ENCODE measurements at regions of chr2 and their contacts with region 1.

Region 1: GRCh38 chr2:30871980-30872789 is 64.9 kb upstream of the CAPN13 start:
- H3K4me3 ChIP-seq: no peak overlapping the region
- H3K27ac ChIP-seq: no peak overlapping the region
- H3K4me1 ChIP-seq: peaks cover 9% of the 10 kb centered on the region
- CTCF ChIP-seq: no peak

Region 2: GRCh38 chr2:30068067-30068466 is 804.1 kb before region 1 on chr2:
- CTCF ChIA-PET with region 1: no interaction called
- POLR2A ChIA-PET with region 1: no interaction called
- H3K4me3 ChIP-seq: no peak overlapping the region
- H3K27ac ChIP-seq: no peak overlapping the region
- H3K4me1 ChIP-seq: no peaks in the 10 kb centered on the region
- CTCF ChIP-seq: no peak

Region 3: DNA sequence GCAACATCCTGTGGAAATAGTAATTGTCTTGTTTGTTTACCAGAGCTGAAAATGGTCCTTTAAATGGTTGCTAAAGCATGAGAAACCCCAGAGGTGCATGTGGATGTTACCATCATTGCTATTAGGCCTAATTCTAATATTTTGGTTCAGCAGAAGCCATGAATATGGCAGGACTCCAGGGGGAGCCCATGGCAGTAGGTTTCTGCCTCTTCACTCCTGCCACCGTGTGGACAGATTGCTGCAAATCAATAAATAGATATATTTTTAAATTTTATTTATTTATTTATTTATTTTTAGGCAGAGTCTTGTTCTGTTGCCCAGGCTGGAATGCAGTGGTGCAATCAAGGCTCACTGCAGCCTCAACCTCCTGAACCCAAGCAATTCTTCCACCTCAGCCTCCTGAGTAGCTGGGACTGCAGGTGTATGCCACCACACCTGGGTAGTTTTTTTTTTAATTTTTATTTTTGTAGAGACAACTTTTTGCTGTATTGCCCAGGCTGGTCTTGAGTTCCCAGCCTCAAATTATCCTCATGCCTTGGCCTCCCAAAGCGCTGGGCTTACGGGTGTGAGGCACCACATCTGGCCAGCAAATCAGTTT is 10.0 kb before region 1 on chr2:
- CTCF ChIA-PET with region 1: interaction called, 10 read pairs
- POLR2A ChIA-PET with region 1: no interaction called
- H3K4me3 ChIP-seq: no peak overlapping the region
- H3K27ac ChIP-seq: no peak overlapping the region
- H3K4me1 ChIP-seq: no peaks in the 10 kb centered on the region; the same call in 1 of the 2 replicates
- CTCF ChIP-seq: no peak; the same call in 1 of the 2 replicates

Region 4: DNA sequence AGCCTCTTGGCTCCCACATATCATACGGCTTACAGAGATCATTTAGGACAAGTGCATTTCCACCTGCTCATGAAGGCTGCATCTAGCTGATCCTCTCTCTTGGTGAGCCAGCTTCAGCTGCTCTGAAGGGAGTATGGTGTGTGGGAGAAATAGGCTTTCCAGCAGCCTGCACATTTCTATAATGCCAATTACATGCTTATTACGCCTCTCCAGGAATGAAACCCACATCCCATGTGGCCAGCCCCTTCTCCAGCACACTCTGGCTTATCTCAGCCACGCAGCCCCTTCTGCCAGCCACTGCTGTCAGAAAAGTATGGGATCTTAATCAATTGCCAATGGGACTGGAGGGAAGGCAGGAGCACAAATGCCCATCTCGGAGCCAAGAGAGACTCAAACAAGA is 148.5 kb after region 1 on chr2:
- CTCF ChIA-PET with region 1: no interaction called
- POLR2A ChIA-PET with region 1: no interaction called
- H3K4me3 ChIP-seq: no peak overlapping the region
- H3K27ac ChIP-seq: no peak overlapping the region
- H3K4me1 ChIP-seq: no peaks in the 10 kb centered on the region
- CTCF ChIP-seq: no peak

Region 5: DNA sequence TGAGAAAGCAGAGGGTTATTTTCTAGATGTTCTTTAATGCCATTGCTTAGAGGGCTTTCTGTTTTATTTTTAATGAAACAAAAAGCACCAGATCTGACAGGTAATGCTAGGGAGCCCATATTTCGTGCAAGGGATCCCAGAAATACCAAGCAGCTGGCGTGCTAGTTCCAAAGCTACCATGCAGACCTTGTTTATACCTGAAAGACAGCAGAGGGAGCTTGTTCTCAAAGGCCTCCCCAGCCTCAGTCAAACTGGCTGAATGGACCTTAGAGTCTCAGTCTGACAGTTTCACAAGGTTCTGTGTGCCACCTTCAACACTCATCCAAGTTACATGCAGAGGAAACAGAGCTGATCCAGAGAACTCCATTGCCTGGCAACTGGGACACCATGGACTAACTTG is 217.5 kb after region 1 on chr2:
- CTCF ChIA-PET with region 1: no interaction called
- POLR2A ChIA-PET with region 1: no interaction called
- H3K4me3 ChIP-seq: no peak overlapping the region
- H3K27ac ChIP-seq: no peak overlapping the region
- H3K4me1 ChIP-seq: no peaks in the 10 kb centered on the region
- CTCF ChIP-seq: no peak

Measured in HEK293 (cell line).